Motor neuron (in vitro differentiated cells): ENCODE measurements at regions of chr13 and their contacts with region 1.

Region 1: GRCh38 chr13:72808917-72809500 is 27.1 kb downstream of the PIBF1 start:
- ATAC-seq: no peak
- H3K4me3 ChIP-seq: no peak overlapping the region
- H3K27ac ChIP-seq: no peak overlapping the region
- H3K4me1 ChIP-seq: no peaks in the 10 kb centered on the region

Region 2: DNA sequence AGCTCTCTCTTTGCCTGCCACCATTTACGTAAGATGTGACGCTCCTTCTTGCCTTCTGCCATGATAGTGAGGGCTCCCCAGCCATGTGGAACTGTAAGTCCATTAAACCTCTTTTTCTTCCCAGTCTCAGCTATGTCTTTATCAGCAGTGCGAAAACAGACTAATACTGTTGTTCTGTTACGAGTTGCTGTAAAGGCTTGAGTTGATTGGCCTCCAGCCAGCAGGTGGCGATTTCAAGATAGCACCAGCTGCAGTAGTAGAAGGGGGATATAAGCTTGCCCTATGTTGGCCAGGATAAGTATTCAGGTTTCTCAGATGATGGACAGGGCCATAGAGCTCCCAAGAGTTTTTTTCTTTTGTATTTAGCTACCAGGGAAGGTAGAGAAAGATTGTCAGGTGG is 467.1 kb before region 1 on chr13:
- in situ Hi-C with region 1: no loop called
- ATAC-seq: no peak
- H3K4me3 ChIP-seq: no peak overlapping the region
- H3K27ac ChIP-seq: no peak overlapping the region
- H3K4me1 ChIP-seq: no peaks in the 10 kb centered on the region

Region 3: DNA sequence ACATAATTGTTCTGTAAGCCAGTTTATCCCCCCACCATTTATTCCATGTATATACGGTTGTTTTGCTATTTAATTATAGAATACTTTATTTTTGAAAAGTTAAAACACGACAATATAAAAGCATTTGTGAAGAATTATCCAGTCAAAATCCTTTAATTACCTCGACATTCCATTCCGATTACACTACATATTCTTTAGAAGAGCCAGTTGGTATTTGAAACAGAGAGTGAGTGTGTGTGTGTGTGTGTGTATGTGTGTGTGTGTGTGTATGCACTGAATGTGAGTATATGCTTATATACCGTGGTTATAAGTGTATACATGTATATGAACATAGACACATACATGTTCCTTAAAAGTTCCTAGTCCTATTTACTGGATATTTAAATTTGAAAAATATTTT is 161.9 kb after region 1 on chr13:
- in situ Hi-C with region 1: no loop called
- ATAC-seq: no peak
- H3K4me3 ChIP-seq: no peak overlapping the region
- H3K27ac ChIP-seq: no peak overlapping the region
- H3K4me1 ChIP-seq: no peaks in the 10 kb centered on the region

Region 4: DNA sequence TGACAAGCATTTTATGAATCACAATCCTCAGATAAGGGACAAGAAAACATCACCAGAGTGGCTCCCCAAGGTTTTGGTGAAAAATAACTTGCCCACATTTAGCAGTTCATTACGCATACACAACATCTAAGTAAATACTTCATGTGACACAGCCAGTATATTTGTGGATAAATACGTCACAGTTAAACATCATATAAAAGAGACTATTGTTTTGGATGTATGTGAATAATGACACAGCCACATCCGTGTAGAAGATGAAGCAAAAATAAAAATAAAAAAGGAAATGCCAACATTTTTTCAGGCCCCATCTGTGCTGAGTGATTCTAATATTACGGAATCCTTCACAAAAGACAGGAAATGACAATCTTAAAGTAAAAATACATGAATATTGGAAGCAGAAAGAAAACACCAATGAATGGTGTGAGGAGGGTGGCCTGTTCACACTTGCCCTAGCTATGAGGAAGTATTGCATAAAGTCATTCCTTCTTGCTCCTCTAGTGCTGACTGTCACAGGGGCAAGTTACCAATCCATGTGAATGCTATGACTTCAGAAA is 868.1 kb after region 1 on chr13:
- in situ Hi-C with region 1: loop called in 1 of 9 experiments (anchors 25 kb)
- ATAC-seq: peak in 2 of 8 experiments; percentile 20 to 28
- H3K4me3 ChIP-seq: no peak overlapping the region
- H3K27ac ChIP-seq: no peak overlapping the region
- H3K4me1 ChIP-seq: peaks cover 7 to 12% of the 10 kb centered on the region in 2 donors

Region 5: DNA sequence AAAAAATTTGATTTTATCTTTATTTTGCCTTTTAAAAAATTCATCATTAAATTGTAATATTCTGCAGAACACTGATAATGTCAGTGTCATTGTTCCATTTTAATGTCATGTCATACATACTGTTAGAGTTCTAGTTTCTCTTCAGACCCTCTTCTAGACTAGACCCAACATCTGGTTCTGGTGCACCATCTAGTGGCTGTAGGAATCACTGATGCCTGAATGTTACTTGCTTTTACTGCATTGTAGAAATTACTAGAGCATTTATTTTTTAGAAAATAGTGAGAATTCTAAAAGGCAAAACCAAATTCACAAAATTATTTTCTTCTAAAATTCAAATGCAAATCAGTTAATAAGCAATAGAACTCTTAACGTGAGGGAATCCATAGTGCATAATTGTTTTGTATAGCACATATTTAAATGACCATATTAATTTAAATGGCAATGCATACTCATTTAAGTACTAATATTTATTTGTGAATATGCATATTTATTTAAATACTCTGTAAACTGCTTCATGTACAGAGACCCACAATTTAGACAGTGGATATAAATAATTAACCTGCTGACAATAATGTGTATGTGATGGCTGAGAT is 899.5 kb after region 1 on chr13:
- in situ Hi-C with region 1: loop called in 3 of 9 experiments (anchors 25 kb)
- ATAC-seq: peak; percentile 76 to 94 (median 88)
- H3K4me3 ChIP-seq: no peak overlapping the region
- H3K27ac ChIP-seq: no peak overlapping the region
- H3K4me1 ChIP-seq: no peaks in the 10 kb centered on the region